ENCODE measurements at regions of chr12 and their contacts with region 1.

Region 1: DNA sequence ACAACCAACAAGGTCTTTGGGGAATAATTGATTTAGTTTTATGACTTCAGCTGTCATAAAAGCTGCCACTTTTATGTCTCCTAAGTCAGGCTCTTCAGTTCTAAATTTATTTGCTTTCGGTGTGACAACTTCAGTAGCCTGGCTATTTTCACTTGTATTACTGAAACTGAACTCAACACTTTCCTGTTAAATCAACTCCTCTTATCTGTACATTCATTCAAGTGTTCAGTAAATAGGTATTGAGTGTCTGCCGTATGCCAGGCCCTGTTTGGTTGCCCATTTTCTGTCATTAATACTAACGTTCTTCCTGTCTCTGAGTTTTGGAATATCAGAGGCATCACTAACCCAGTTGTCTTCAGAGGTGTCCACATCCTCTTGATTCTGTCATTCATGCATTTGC is 7.5 kb downstream of the UTP20 start:
- DNase-seq: no peak
- H3K4me3 ChIP-seq: no peak overlapping the region
- H3K27ac ChIP-seq: no peak overlapping the region
- H3K4me1 ChIP-seq: no peaks in the 10 kb centered on the region
- CTCF ChIP-seq: no peak

Region 2: DNA sequence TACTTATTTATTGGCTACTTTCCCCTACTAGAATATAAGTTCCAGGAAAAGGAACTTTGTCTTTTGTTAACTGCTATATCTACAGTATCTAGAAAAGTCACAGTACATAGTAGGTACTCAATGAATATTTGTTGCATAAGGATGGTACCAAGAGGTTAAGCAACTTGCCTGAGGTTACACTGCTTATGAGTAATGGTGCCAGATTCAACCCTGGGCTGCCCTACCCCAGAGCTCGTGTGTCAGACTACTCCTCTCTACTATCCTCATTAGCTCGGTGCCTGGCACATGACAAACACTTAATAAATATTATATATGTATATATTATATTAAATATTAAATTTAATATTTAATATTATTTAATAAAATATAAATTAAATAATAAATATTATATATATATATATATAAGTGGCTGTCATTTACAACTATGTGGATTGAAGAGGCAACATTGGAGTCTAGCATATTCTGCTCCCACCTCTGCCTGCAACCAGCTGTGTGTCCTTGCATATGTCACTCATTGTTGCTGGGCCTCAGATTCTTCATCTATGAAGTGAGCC is 17.9 kb after region 1 on chr12:
- CTCF ChIA-PET with region 1: no interaction called
- POLR2A ChIA-PET with region 1: no interaction called
- intact Hi-C with region 1: no loop called
- DNase-seq: no peak
- H3K4me3 ChIP-seq: no peak overlapping the region
- H3K27ac ChIP-seq: no peak overlapping the region
- H3K4me1 ChIP-seq: no peaks in the 10 kb centered on the region
- CTCF ChIP-seq: no peak

Region 3: DNA sequence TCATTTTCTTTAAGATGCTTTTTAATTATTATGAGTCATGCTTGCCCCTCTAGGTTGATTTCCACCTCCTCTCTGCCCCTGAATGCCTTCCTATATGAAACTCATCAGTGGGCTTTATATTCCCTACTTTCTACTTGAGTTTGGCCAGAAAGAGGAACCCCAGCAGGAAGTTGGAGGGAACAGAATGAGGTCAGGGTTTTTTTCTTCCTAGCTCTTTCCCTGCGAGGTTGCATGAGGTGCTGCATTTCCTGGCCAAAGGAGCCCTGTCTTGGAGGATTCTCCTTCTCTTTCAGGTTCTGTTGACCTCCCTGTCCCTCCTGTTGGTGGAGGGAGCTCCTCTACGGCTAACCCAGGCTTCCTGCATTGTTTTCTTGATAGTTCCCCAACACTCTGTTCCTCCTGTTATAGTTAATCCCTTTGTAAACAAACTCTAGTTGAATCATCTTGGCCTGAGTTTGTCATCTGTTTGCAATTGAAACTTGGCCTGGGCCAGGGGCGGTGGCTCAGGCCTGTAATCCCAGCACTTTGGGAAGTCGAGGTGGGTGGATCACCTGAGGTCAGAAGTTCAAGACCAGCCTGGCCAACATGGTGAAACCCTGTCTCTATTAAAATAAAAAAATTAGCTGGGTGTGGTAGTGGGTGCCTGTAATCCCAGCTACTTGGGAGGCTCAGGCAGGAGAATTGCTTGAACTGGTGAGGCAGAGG is 172.4 kb after region 1 on chr12:
- CTCF ChIA-PET with region 1: no interaction called
- POLR2A ChIA-PET with region 1: interaction called, 10 read pairs
- intact Hi-C with region 1: no loop called
- DNase-seq: no peak
- H3K4me3 ChIP-seq: no peak overlapping the region
- H3K27ac ChIP-seq: no peak overlapping the region
- H3K4me1 ChIP-seq: no peaks in the 10 kb centered on the region
- CTCF ChIP-seq: no peak